Activated B cell treated with CpG ODN at 0.5 μM for 24 hours (primary cell): ENCODE measurements at regions of chr2 and their contacts with region 1.

Region 1: GRCh38 chr2:44802777-44803424 is 138.6 kb upstream of the SIX3 start:
- DNase-seq: no peak
- ATAC-seq: no peak
- H3K4me3 Mint-ChIP-seq: peak overlapping the region; percentile 52
- H3K27ac Mint-ChIP-seq: no peak overlapping the region
- H3K4me1 Mint-ChIP-seq: peaks cover 23% of the 10 kb centered on the region
- H3K27me3 Mint-ChIP-seq: peaks cover 81% of the 10 kb centered on the region
- CTCF ChIP-seq: no peak

Region 2: DNA sequence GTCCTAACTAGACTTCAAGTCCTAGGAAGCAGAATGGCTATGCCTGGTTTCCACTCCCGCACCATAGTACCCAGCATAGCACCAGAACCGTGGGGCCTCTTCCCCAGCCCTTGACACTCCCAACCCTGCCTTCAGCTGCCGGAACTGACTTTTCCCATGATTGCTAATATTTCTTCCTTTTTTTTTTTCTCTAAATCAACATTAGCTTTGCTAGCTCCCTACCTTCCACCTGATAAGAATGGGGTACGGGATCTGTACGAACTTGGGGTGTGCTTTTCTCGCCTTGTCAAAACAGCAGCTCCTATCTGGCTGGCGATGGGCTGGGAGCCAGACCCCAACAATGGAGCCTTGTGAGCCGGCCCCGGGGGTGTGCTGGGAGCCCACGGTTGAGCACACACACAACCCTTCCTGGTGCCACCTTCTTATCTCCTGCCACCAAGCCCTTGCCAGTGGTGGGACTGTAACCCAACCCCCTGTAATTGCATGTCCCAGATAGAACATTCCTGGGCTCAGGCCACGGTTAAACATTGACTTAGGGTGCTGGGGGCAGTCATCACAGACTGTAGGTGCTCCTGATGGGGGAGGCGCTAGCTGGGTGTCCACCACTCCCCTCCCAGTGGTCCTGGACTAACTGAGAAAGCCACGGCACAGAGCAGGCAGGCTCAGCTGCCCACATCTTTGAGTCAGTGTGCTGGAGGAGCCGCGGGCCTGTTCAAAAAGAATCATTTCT is 1797.5 kb before region 1 on chr2:
- CTCF ChIA-PET with region 1: no interaction called
- POLR2A ChIA-PET with region 1: no interaction called
- intact Hi-C with region 1: no loop called
- DNase-seq: no peak
- ATAC-seq: no peak
- H3K4me3 Mint-ChIP-seq: no peak overlapping the region
- H3K27ac Mint-ChIP-seq: no peak overlapping the region
- H3K4me1 Mint-ChIP-seq: peaks cover 7% of the 10 kb centered on the region
- H3K27me3 Mint-ChIP-seq: peaks cover 22% of the 10 kb centered on the region
- CTCF ChIP-seq: no peak

Region 3: GRCh38 chr2:44934983-44935728 is 132.3 kb after region 1 on chr2:
- CTCF ChIA-PET with region 1: no interaction called
- POLR2A ChIA-PET with region 1: no interaction called
- intact Hi-C with region 1: loop called (anchors 5 kb)
- DNase-seq: no peak
- ATAC-seq: no peak
- H3K4me3 Mint-ChIP-seq: no peak overlapping the region
- H3K27ac Mint-ChIP-seq: no peak overlapping the region
- H3K4me1 Mint-ChIP-seq: peaks cover 55% of the 10 kb centered on the region
- H3K27me3 Mint-ChIP-seq: peaks cover 66% of the 10 kb centered on the region
- CTCF ChIP-seq: no peak

Region 4: GRCh38 chr2:45000921-45001868 is 198.3 kb after region 1 on chr2:
- CTCF ChIA-PET with region 1: no interaction called
- POLR2A ChIA-PET with region 1: no interaction called
- intact Hi-C with region 1: loop called (anchors 5 kb)
- DNase-seq: no peak
- ATAC-seq: no peak
- H3K4me3 Mint-ChIP-seq: peak overlapping the region; percentile 59
- H3K27ac Mint-ChIP-seq: no peak overlapping the region
- H3K4me1 Mint-ChIP-seq: peaks cover 34% of the 10 kb centered on the region
- H3K27me3 Mint-ChIP-seq: peaks cover 70% of the 10 kb centered on the region
- CTCF ChIP-seq: no peak